ENCODE measurements at regions of chr18 and their contacts with region 1.

Region 1: DNA sequence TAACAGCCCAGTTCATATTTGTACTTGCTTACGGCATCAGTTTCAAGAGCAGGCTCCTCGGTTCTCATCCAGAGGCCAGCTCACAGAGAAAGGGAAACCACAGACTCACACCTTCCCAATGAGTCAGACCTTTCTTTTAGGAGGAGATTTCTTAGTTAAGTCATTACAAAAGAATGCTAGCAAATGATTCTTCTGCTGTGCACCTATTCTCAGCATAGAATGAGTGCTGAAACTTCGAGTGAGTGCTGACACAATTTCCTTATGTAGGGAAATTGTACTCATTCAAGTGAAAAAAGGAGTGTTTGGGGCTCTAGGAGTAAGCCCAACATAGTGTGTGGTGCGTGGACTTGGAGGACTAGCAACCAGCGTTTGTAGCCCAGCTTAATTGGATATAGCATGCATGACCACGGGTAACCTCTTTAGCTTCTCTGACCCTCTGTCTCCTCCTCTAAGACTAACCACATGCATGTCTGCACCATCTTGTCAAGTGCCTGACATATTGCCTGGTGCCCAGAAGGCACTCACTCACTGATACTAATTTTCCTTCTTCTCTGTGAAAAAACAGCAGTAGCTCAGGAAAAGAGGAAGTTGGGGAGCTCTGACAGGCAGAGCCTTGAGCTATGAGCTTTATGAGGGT is 87.0 kb downstream of the ALPK2 start:
- DNase-seq: peak; percentile 87
- H3K4me3 Mint-ChIP-seq: no peak overlapping the region
- H3K27ac Mint-ChIP-seq: peak overlapping the region; percentile 88
- H3K4me1 Mint-ChIP-seq: peaks cover 83% of the 10 kb centered on the region
- H3K27me3 Mint-ChIP-seq: no peaks in the 10 kb centered on the region

Region 2: GRCh38 chr18:57819671-57820460 is 722.0 kb before region 1 on chr18:
- CTCF ChIA-PET with region 1: no interaction called
- intact Hi-C with region 1: no loop called
- DNase-seq: peak; percentile 24
- H3K4me3 Mint-ChIP-seq: no peak overlapping the region
- H3K27ac Mint-ChIP-seq: no peak overlapping the region
- H3K4me1 Mint-ChIP-seq: no peaks in the 10 kb centered on the region
- H3K27me3 Mint-ChIP-seq: peaks cover 11% of the 10 kb centered on the region

Region 3: DNA sequence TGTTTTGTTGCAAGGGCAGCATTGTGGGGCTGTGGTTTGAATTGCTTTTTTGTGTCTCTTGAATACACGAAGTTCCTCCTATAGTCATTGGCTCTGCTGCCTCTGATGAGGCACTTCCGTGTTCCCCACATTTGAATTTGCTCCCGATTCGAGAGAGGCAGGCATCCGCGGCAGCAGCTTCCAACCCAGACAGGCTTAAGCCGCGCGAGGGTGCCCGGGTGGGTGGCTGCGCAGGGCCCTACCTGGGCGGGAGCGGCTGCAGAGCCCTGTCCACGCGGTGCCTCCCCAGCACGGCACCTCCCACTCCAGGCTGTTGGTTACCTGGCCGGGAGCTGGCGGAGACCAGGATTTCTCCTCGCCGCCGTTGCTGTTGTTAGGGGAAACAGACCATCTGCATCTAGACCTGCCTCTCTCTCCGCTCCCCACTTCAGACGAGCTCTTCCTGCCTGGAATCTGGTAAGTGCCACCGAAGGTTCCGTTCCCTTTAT is 346.6 kb before region 1 on chr18:
- CTCF ChIA-PET with region 1: no interaction called
- intact Hi-C with region 1: no loop called
- DNase-seq: peak; percentile 36
- H3K4me3 Mint-ChIP-seq: peak overlapping the region; percentile 80
- H3K27ac Mint-ChIP-seq: peak overlapping the region; percentile 12
- H3K4me1 Mint-ChIP-seq: peaks cover 16% of the 10 kb centered on the region
- H3K27me3 Mint-ChIP-seq: no peaks in the 10 kb centered on the region

Region 4: GRCh38 chr18:58552057-58552461 is 10.2 kb after region 1 on chr18:
- CTCF ChIA-PET with region 1: interaction called, 3 read pairs
- intact Hi-C with region 1: loop called (anchors 1 kb)
- DNase-seq: peak; percentile 73
- H3K4me3 Mint-ChIP-seq: no peak overlapping the region
- H3K27ac Mint-ChIP-seq: peak overlapping the region; percentile 68
- H3K4me1 Mint-ChIP-seq: peaks cover 51% of the 10 kb centered on the region
- H3K27me3 Mint-ChIP-seq: no peaks in the 10 kb centered on the region

Region 5: GRCh38 chr18:58605027-58606020 is 63.4 kb after region 1 on chr18:
- CTCF ChIA-PET with region 1: interaction called, 3 read pairs
- intact Hi-C with region 1: loop called (anchors 1 kb)
- DNase-seq: peak; percentile 84
- H3K4me3 Mint-ChIP-seq: no peak overlapping the region
- H3K27ac Mint-ChIP-seq: no peak overlapping the region
- H3K4me1 Mint-ChIP-seq: peaks cover 60% of the 10 kb centered on the region
- H3K27me3 Mint-ChIP-seq: no peaks in the 10 kb centered on the region

Region 6: GRCh38 chr18:58649966-58650816 is 108.3 kb after region 1 on chr18:
- CTCF ChIA-PET with region 1: interaction called, 5 read pairs
- intact Hi-C with region 1: loop called (anchors 1 kb)
- DNase-seq: peak; percentile 78
- H3K4me3 Mint-ChIP-seq: no peak overlapping the region
- H3K27ac Mint-ChIP-seq: no peak overlapping the region
- H3K4me1 Mint-ChIP-seq: peaks cover 59% of the 10 kb centered on the region
- H3K27me3 Mint-ChIP-seq: no peaks in the 10 kb centered on the region

Region 7: GRCh38 chr18:58699551-58699950 is 157.6 kb after region 1 on chr18:
- CTCF ChIA-PET with region 1: interaction called, 3 read pairs
- intact Hi-C with region 1: loop called (anchors 1 kb)
- DNase-seq: no peak
- H3K4me3 Mint-ChIP-seq: no peak overlapping the region
- H3K27ac Mint-ChIP-seq: no peak overlapping the region
- H3K4me1 Mint-ChIP-seq: peaks cover 50% of the 10 kb centered on the region
- H3K27me3 Mint-ChIP-seq: no peaks in the 10 kb centered on the region

Region 8: GRCh38 chr18:59358712-59359575 is 817.0 kb after region 1 on chr18 and contains the start of gene LMAN1:
- CTCF ChIA-PET with region 1: no interaction called
- intact Hi-C with region 1: loop called (anchors 5 kb)
- DNase-seq: peak; percentile 96
- H3K4me3 Mint-ChIP-seq: peak within 1 kb of the TSS; percentile 98
- H3K27ac Mint-ChIP-seq: peak within 1 kb of the TSS; percentile 98
- H3K4me1 Mint-ChIP-seq: peaks cover 36% of the 10 kb centered on the region
- H3K27me3 Mint-ChIP-seq: no peaks in the 10 kb centered on the region
- total RNA-seq, gene LMAN1: 146 to 151 TPM

Measured in activated naive CD4-positive, alpha-beta T cell treated with anti-CD3 and anti-CD28 coated beads for 36 hours (primary cell).